ENCODE measurements at regions of chr4 and their contacts with region 1.

Region 1: GRCh38 chr4:38099908-38100407 is 139.8 kb downstream of the PTTG2 start:
- DNase-seq: peak; percentile 92
- H3K4me3 ChIP-seq: no peak overlapping the region
- H3K27ac ChIP-seq: peak overlapping the region; percentile 99
- H3K4me1 ChIP-seq: peaks cover 34% of the 10 kb centered on the region
- H3K27me3 ChIP-seq: no peaks in the 10 kb centered on the region
- CTCF ChIP-seq: no peak

Region 2: GRCh38 chr4:37666625-37667071 is 433.3 kb before region 1 on chr4:
- CTCF ChIA-PET with region 1: no interaction called
- dilution Hi-C with region 1: no loop called
- in situ Hi-C with region 1: no loop called
- intact Hi-C with region 1: loop called (anchors 1 kb)
- DNase-seq: peak; percentile 92
- H3K4me3 ChIP-seq: no peak overlapping the region
- H3K27ac ChIP-seq: peak overlapping the region; percentile 47
- H3K4me1 ChIP-seq: peaks cover 40% of the 10 kb centered on the region
- H3K27me3 ChIP-seq: no peaks in the 10 kb centered on the region
- CTCF ChIP-seq: peak in 1 of 2 donors; percentile 21

Region 3: DNA sequence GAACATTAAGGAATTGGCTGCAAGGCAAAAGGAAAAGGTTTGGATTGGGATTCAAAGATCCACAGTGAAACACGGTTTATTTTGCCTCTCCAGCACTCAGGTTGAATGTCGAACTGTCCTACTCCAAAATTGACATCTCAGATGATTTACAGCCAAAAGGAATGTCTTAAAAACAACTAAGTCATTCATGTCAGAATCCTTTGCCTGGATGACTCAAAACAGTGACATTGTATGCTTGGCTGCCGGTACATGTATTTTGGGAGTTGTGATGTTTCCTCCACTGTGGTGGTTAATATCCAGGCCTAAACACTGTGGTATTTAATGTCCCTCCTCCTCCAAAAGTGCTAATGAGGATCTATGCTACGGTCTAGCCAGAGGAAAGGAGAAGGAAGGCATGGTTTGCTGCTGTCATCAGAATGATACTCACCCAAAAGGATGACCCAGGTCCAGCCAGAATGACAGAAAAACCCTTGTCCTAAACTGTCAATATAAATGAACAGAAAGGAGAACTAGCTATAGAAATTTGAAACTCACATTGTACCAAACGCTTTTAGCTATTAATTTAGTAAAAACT is 252.6 kb before region 1 on chr4:
- CTCF ChIA-PET with region 1: no interaction called
- dilution Hi-C with region 1: no loop called
- in situ Hi-C with region 1: no loop called
- intact Hi-C with region 1: no loop called
- DNase-seq: peak; percentile 14
- H3K4me3 ChIP-seq: no peak overlapping the region
- H3K27ac ChIP-seq: no peak overlapping the region
- H3K4me1 ChIP-seq: no peaks in the 10 kb centered on the region
- H3K27me3 ChIP-seq: no peaks in the 10 kb centered on the region
- CTCF ChIP-seq: no peak

Region 4: DNA sequence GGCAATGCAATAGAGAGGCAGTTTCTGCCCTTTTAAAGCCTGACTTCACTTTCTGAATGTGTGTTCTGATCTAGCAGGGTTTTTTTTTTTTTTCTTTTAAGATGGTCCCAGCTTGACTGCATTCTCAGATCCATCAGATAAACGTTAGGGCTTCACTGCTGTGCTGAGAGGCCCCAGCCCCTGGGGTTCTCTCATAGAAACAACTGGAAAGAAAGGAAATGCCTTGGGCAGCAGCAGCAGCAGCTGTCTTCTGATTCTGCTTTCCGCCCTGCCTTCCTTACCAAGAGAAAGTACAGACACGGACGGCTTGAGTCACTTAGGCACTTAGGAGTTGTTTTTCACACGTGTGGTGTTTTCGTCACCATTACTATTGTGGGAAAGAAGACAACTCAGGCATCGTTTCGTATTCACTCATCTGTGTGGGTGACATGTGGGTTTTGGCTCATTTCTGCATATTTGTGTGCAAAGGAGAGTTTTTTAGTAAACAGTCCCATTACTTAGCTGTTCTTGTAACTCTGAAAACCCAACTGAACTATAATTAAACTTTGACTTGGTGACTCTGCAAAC is 32.2 kb after region 1 on chr4:
- CTCF ChIA-PET with region 1: no interaction called
- dilution Hi-C with region 1: no loop called
- in situ Hi-C with region 1: no loop called
- intact Hi-C with region 1: loop called (anchors 1 kb)
- DNase-seq: peak; percentile 99
- H3K4me3 ChIP-seq: no peak overlapping the region
- H3K27ac ChIP-seq: peak overlapping the region; percentile 99
- H3K4me1 ChIP-seq: peaks cover 35% of the 10 kb centered on the region
- H3K27me3 ChIP-seq: no peaks in the 10 kb centered on the region
- CTCF ChIP-seq: no peak

Region 5: DNA sequence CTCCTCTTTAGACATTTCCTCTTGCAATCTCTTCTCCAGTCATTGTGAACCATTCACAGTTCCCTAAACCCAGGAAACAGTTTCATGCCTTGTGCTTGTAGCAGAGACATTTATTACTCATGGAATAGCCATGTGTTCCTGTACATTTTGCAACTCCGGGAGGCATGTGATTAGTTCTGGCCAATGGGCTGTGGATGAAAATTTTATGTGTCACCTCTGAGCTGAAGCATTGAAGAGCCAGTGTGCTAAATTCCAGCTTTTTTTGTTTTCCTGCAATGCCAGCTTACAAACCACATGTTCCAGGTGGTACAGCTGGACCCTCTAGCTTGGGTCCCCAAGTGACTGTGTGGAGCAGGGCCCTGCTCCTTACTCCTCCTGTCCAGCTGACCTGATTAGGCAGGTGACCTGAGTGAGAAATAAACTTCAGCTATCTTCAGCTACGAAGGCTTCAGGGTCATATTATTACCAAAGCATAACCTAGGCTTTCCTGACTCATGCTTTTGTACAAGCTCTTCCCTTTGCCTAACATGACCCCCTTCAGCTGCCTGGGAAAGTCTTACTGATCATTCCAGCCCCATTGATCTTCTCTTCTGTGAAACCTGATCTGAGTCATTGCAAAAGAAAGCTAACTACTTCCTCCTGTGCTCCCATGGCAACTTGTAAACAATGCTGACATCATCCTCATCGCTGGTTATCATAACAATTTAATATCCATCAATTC is 60.7 kb after region 1 on chr4:
- CTCF ChIA-PET with region 1: no interaction called
- dilution Hi-C with region 1: no loop called
- in situ Hi-C with region 1: no loop called
- intact Hi-C with region 1: loop called (anchors 1 kb)
- DNase-seq: peak; percentile 97
- H3K4me3 ChIP-seq: no peak overlapping the region
- H3K27ac ChIP-seq: peak overlapping the region; percentile 100
- H3K4me1 ChIP-seq: peaks cover 49% of the 10 kb centered on the region
- H3K27me3 ChIP-seq: no peaks in the 10 kb centered on the region
- CTCF ChIP-seq: no peak

Region 6: DNA sequence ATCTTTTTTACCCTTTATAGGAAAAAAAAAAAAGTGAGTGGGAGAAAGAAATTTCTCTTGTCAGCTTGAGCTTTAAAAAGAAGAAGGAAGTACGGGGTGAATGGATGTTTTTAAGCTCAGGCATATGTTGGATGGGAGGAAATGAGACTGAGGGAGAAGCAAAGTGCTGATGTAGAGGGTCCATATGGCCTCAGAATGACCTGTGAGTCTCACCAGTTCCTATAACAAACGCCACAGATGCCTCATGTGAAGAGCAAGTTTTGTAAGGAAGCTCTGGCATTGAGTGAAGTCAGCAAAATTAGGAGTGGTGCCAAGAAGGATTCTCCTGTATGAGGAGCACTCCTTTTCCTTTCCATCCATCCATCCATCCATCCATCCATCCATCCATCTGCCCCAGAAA is 74.8 kb after region 1 on chr4:
- CTCF ChIA-PET with region 1: no interaction called
- dilution Hi-C with region 1: no loop called
- in situ Hi-C with region 1: no loop called
- intact Hi-C with region 1: loop called (anchors 2 kb)
- DNase-seq: peak; percentile 25
- H3K4me3 ChIP-seq: no peak overlapping the region
- H3K27ac ChIP-seq: peak overlapping the region; percentile 55
- H3K4me1 ChIP-seq: peaks cover 28% of the 10 kb centered on the region
- H3K27me3 ChIP-seq: no peaks in the 10 kb centered on the region
- CTCF ChIP-seq: no peak

Region 7: DNA sequence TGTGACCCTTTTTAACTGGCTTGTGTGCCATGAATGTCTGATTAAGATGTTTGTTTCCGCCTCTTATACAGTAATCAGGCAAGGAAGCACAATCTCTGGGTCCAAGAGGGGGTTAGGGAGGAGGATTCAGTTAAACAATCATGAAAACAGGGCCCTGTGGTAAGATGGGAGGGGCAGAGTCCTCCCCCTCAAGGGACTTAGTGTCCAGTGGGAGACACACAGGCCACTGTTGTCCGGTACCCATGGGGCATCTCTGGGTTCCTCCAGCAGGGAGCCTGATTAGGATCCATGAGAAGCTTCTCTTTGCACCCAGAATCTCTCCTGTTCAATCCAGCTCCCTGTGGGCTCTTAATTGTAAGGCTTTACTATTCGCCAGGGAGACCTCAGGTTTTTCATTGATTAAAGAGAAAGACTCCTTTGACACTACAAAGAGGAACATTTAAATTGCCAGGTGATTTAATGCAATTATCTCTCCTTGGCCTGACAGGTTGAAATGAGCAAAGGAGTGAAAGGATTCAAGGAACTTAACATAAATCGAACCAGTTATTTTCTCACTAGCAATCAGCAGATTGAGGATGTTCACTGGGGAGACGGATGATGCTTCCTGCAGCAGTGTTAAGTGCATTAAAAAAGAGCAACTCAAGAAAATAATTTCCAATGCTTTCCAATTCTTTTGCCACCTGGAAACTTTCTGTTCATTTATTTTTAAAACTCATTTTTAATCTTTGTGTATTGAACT is 85.6 kb after region 1 on chr4:
- CTCF ChIA-PET with region 1: no interaction called
- dilution Hi-C with region 1: no loop called
- in situ Hi-C with region 1: no loop called
- intact Hi-C with region 1: no loop called
- DNase-seq: no peak
- H3K4me3 ChIP-seq: no peak overlapping the region
- H3K27ac ChIP-seq: no peak overlapping the region
- H3K4me1 ChIP-seq: peaks cover 29% of the 10 kb centered on the region
- H3K27me3 ChIP-seq: no peaks in the 10 kb centered on the region
- CTCF ChIP-seq: no peak